SK-N-SH (cell line): ENCODE measurements at regions of chr12 and their contacts with region 1.

Region 1: DNA sequence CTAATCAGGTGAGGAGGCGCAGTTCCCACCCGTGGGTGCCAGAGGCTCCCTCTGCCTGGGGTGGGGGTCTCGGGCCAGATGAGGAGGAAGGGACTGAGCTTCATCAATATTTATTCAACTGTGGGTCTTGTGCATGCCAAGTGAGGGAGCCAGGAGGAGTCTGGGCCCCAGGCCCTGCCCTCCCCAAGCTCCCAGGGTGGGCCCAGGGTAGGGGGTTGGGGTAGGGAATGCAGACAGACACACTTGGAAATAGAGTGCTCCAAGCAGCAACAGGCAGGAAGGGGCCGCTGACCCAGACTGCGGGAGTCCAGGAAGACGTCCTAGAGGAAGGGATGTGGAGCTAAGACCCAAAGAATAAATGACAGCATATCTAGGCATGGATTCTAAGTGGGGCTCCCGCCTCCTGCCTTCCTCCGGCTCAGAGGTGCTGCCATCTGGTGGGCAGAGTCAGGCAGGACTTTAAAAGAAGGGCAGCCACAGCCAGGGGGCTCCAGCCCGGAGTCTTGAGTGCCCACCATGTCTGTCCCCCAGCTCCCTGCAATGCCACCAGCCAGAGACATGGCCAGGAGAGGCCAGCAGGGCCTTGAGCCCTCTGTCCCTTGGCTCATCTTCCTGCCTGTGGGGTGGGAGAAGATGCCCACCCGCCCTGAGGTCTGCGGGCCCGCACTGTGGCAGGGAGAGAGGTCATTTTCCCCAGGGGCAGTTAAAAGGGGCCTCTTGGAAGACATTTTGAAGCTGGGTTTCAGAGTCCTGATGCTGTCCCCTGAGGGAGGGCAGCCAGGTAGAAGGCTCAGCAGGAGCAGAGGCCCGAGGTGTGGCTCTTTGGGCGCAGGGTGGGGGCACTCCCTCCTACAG is 70.1 kb downstream of the PHETA1 start:
- DNase-seq: peak; percentile 90
- H3K4me3 ChIP-seq: peak overlapping the region in 1 of 2 experiments; percentile 35; a peak in 1 of 4 replicates
- H3K27ac ChIP-seq: no peak overlapping the region
- H3K4me1 ChIP-seq: peaks cover 0 to 3% of the 10 kb centered on the region in 2 experiments; a peak in 1 of 4 replicates
- H3K27me3 ChIP-seq: no peaks in the 10 kb centered on the region; the same call in 1 of the 2 replicates
- CTCF ChIP-seq: peak; percentile 80
- EP300 ChIP-seq: no peak
- RAD21 ChIP-seq: peak; percentile 84

Region 2: GRCh38 chr12:111033281-111034082 is 265.3 kb before region 1 on chr12:
- CTCF ChIA-PET with region 1: interaction called, 21 read pairs
- POLR2A ChIA-PET with region 1: no interaction called
- DNase-seq: peak; percentile 85
- H3K4me3 ChIP-seq: peak overlapping the region in 1 of 2 experiments; percentile 51; a peak in 3 of 4 replicates
- H3K27ac ChIP-seq: peak overlapping the region in 1 of 2 experiments; percentile 67; a peak in 1 of 4 replicates
- H3K4me1 ChIP-seq: peaks cover 0 to 6% of the 10 kb centered on the region in 2 experiments; a peak in 2 of 4 replicates
- H3K27me3 ChIP-seq: peaks cover 43% of the 10 kb centered on the region
- CTCF ChIP-seq: peak; percentile 38
- EP300 ChIP-seq: no peak
- RAD21 ChIP-seq: 0 out of 2 replicates have a peak, but pooled peaks have one; percentile 30

Region 3: GRCh38 chr12:111143271-111143670 is 155.5 kb before region 1 on chr12:
- CTCF ChIA-PET with region 1: interaction called, 48 read pairs
- POLR2A ChIA-PET with region 1: no interaction called
- DNase-seq: no peak
- H3K4me3 ChIP-seq: no peak overlapping the region
- H3K27ac ChIP-seq: no peak overlapping the region
- H3K4me1 ChIP-seq: peaks cover 0 to 5% of the 10 kb centered on the region in 2 experiments; a peak in 1 of 4 replicates
- H3K27me3 ChIP-seq: no peaks in the 10 kb centered on the region
- CTCF ChIP-seq: no peak
- EP300 ChIP-seq: no peak
- RAD21 ChIP-seq: no peak

Region 4: DNA sequence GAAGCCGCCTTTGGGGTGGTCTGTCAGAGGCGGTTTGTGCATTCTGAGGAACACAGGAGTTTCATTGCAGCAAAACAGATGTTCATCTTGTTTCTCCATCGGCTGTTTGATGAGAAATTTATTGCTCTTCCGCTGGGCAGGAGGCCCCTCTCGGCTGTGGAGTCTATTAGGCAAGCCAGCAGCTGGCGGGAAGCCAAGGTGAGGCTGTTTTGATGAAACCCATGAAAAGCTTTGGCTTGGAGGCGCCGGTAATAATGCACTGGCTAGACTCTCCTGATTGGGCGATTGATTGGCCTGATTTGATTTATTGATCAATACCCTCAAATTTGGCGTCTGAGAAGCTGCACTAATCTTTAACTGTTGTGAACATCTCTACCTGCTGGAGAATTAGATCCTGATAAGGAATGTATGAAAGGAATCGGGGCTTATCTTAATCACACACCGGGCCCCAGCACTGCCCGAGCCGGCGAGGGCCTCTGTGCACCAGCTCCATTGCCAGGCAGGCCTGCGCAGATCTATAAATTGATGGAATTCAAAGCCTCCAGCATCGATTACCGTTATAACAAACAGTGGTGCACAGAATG is 117.6 kb before region 1 on chr12:
- CTCF ChIA-PET with region 1: interaction called, 19 read pairs
- POLR2A ChIA-PET with region 1: no interaction called
- DNase-seq: peak; percentile 83
- H3K4me3 ChIP-seq: no peak overlapping the region; a peak in 1 of 4 replicates
- H3K27ac ChIP-seq: peak overlapping the region in 1 of 2 experiments; percentile 99; a peak in 2 of 4 replicates
- H3K4me1 ChIP-seq: peaks cover 4 to 83% of the 10 kb centered on the region in 2 experiments; a peak in 3 of 4 replicates
- H3K27me3 ChIP-seq: peaks cover 9% of the 10 kb centered on the region; the same call in 1 of the 2 replicates
- CTCF ChIP-seq: no peak
- EP300 ChIP-seq: peak in 1 of 2 experiments; percentile 88; a peak in 2 of 4 replicates
- RAD21 ChIP-seq: peak; percentile 38

Region 5: GRCh38 chr12:111261911-111262676 is 36.7 kb before region 1 on chr12:
- CTCF ChIA-PET with region 1: interaction called, 14 read pairs
- POLR2A ChIA-PET with region 1: interaction called, 3 read pairs
- DNase-seq: no peak
- H3K4me3 ChIP-seq: no peak overlapping the region
- H3K27ac ChIP-seq: no peak overlapping the region
- H3K4me1 ChIP-seq: no peaks in the 10 kb centered on the region
- H3K27me3 ChIP-seq: no peaks in the 10 kb centered on the region; the same call in 1 of the 2 replicates
- CTCF ChIP-seq: no peak
- EP300 ChIP-seq: no peak
- RAD21 ChIP-seq: no peak

Region 6: DNA sequence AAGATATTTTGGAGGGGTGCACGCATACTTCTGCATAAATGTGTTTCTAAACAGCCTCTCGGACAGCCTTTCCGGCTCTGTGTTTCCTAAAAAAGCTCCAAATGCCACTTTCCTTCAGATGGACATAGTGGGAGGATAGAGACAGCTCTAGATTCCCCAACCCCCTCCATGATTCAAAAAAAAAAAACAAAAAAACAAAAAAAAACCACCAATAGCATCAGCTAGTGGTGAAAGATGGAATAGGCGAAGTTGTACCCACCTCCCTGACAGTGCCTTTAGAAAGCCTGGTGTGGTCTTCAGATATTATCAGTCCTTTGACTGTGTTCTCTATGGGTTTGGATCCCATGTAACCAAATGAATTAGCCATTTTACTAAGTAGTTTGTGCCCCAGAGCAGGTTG is 24.0 kb before region 1 on chr12:
- CTCF ChIA-PET with region 1: interaction called, 50 read pairs
- POLR2A ChIA-PET with region 1: no interaction called
- DNase-seq: peak; percentile 81
- H3K4me3 ChIP-seq: no peak overlapping the region; a peak in 1 of 4 replicates
- H3K27ac ChIP-seq: peak overlapping the region in 1 of 2 experiments; percentile 91; a peak in 2 of 4 replicates
- H3K4me1 ChIP-seq: peaks cover 0 to 14% of the 10 kb centered on the region in 2 experiments; a peak in 2 of 4 replicates
- H3K27me3 ChIP-seq: no peaks in the 10 kb centered on the region; the same call in 1 of the 2 replicates
- CTCF ChIP-seq: peak; percentile 53
- EP300 ChIP-seq: no peak
- RAD21 ChIP-seq: peak; percentile 70

Region 7: DNA sequence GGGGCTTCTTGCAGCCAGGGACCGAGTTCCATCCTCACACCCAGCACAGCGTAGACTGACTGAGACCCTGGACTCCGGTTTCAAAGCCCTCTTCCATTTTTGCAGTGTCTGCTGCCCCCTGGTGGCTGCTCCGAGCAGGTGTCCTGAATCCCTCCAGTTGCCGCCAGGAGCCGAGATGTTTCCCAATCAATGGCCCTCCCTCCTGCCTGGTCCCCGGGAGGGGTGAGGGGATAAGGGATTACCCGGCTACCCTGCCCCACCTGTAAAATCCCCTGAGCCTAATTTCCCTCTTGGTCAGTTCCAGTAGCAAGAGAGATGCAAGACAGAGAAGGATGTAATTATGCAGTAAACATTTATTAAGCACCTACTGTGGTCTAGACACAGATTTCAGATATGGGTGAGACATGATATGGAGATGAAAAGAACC is 15.0 kb after region 1 on chr12:
- CTCF ChIA-PET with region 1: interaction called, 39 read pairs
- POLR2A ChIA-PET with region 1: no interaction called
- DNase-seq: peak; percentile 93
- H3K4me3 ChIP-seq: no peak overlapping the region; a peak in 1 of 4 replicates
- H3K27ac ChIP-seq: no peak overlapping the region
- H3K4me1 ChIP-seq: no peaks in the 10 kb centered on the region; a peak in 1 of 4 replicates
- H3K27me3 ChIP-seq: no peaks in the 10 kb centered on the region
- CTCF ChIP-seq: peak; percentile 92
- EP300 ChIP-seq: no peak
- RAD21 ChIP-seq: peak; percentile 92